OCI-LY7 (cell line): ENCODE measurements at regions of chr6 and their contacts with region 1.

Region 1: GRCh38 chr6:156776840-156777576 is at the start of gene ARID1B:
- DNase-seq: peak; percentile 94
- H3K4me3 ChIP-seq: peak within 1 kb of the TSS; percentile 80
- H3K27ac ChIP-seq: peak within 1 kb of the TSS; percentile 97
- H3K4me1 ChIP-seq: peaks cover 36% of the 10 kb centered on the region
- CTCF ChIP-seq: no peak
- total RNA-seq, gene ARID1B: 71.8 and 90.1 TPM in 2 replicates

Region 2: GRCh38 chr6:156564127-156564806 is 212.7 kb before region 1 on chr6:
- CTCF ChIA-PET with region 1: interaction called, 5 read pairs
- POLR2A ChIA-PET with region 1: interaction called, 5 read pairs
- intact Hi-C with region 1: loop called (anchors 2 kb)
- DNase-seq: peak; percentile 89
- H3K4me3 ChIP-seq: peak overlapping the region; percentile 25
- H3K27ac ChIP-seq: peak overlapping the region; percentile 57
- H3K4me1 ChIP-seq: peaks cover 23% of the 10 kb centered on the region
- CTCF ChIP-seq: peak; percentile 100

Region 3: GRCh38 chr6:156686995-156687788 is 89.8 kb before region 1 on chr6:
- CTCF ChIA-PET with region 1: no interaction called
- POLR2A ChIA-PET with region 1: interaction called, 3 read pairs
- intact Hi-C with region 1: loop called (anchors 1 kb)
- DNase-seq: peak; percentile 89
- H3K4me3 ChIP-seq: peak overlapping the region; percentile 73
- H3K27ac ChIP-seq: peak overlapping the region; percentile 92
- H3K4me1 ChIP-seq: peaks cover 57% of the 10 kb centered on the region
- CTCF ChIP-seq: no peak

Region 4: DNA sequence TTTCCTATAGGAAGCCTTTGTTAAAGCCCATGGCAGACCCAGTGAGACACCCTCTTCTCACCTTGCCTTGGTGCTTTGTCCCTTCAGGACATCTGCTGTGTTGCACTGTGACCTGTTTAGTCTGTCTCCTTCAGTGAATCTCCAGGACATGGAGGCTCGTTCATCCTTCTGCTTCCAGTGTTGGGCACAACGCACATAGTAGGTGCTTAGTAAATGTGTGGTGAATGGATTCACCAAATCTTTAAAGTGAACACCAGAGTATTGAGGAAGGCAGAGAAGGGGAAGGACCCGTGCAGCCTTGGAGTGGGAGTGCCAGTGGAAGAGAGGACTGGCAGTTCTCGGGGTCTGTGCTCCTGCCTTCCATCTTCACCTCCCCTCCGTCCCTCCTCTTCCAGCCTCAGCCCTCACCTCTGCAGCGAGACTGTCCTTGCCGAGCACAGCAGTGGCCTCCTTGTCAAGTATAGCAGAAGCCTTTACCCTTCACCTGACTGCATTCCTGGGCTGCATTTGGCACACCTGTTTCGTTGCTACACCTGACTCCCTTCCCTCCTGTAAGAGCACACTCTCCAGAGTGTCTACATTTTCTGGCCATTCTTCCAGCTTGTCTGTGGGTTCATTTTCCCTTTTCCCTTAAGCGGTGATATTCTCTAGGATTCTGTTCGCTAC is 49.4 kb after region 1 on chr6:
- CTCF ChIA-PET with region 1: interaction called, 20 read pairs
- POLR2A ChIA-PET with region 1: no interaction called
- intact Hi-C with region 1: no loop called
- DNase-seq: no peak
- H3K4me3 ChIP-seq: no peak overlapping the region
- H3K27ac ChIP-seq: no peak overlapping the region
- H3K4me1 ChIP-seq: no peaks in the 10 kb centered on the region
- CTCF ChIP-seq: no peak

Region 5: GRCh38 chr6:156933201-156934068 is 156.4 kb after region 1 on chr6:
- CTCF ChIA-PET with region 1: interaction called, 3 read pairs
- POLR2A ChIA-PET with region 1: no interaction called
- intact Hi-C with region 1: loop called (anchors 5 kb)
- DNase-seq: peak; percentile 58
- H3K4me3 ChIP-seq: no peak overlapping the region
- H3K27ac ChIP-seq: peak overlapping the region; percentile 13
- H3K4me1 ChIP-seq: peaks cover 19% of the 10 kb centered on the region
- CTCF ChIP-seq: peak; percentile 66

Region 6: DNA sequence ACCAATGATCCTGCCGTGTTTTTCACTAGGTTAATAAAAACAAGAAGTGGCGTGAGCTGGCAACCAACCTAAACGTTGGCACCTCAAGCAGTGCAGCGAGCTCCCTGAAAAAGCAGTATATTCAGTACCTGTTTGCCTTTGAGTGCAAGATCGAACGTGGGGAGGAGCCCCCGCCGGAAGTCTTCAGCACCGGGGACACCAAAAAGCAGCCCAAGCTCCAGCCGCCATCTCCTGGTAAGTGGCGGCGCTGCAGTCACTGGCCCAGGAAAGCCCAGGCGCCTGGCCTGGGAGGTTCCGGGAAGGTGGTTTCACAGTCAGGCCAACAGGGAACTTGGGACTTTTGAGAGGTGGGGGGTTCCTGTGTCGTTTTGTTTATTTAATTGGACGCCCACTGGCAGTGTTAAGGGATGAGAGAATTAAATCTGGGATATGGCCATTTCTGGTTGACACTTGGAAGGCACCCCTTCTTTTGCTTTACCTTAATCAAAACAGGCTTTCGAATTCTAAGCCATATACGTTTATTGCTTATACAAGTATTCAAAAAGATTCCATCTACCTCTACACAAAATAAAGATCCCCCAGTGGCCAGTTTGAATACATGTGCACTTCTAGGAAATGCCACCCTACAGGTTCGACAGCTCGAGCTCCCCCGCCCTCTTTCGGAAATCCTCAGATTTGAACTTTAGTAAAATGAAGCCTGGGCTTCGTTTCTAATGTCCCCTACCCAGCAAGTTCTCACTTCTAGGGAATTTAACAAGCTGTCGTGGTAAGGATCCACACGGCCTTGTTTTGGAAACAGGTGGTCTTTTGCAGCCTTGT is 407.4 kb after region 1 on chr6:
- CTCF ChIA-PET with region 1: no interaction called
- POLR2A ChIA-PET with region 1: no interaction called
- intact Hi-C with region 1: loop called (anchors 10 kb)
- DNase-seq: peak; percentile 56
- H3K4me3 ChIP-seq: no peak overlapping the region
- H3K27ac ChIP-seq: no peak overlapping the region
- H3K4me1 ChIP-seq: no peaks in the 10 kb centered on the region
- CTCF ChIP-seq: peak; percentile 85